Activated naive CD4-positive, alpha-beta T cell treated with anti-CD3 and anti-CD28 coated beads for 36 hours (primary cell): ENCODE measurements at regions of chr1 and their contacts with region 1.

Region 1: DNA sequence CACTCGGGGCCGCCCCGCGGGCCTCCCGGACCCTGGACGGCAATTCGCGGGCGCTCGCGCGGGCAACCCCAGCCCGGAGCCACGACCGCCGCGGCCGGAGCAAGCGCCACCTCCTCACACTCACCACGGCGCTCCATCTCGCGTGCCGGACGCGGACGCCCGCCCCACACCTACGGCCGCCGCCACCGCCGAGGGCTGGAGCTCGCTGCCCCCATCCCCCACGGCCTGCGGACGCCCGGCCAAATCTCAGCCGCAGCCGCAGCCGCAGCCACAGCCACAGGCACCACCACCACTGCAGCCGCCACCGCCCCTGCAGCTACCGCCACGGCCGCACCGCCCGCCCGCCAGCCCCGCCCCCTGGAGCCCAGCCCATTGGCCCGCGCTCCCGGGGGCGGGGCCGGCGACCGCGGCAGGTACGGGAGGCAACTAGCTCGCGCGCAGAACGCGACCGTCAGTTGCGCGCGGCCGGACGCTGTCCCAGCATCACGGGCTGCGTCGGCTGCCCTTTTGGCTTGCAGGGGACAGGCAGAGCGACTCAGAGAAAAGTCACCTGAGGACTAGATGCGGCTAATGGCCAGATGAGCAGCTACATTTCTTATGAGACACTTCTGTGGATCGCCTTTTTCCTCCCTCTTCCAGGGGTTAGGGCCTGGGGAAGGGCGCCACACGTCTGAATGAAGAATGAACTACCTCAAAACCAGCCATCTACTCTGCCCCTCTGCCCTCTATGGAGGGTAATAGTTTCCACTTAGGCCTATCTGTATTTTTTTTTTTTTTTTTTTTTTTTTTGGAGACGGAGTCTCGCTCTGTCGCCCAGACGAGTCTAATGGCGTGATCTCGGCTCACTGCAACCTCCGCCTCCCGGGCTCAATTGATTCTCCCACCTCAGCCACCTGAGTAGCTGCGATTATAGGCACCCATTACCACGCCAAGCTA is at the start of gene ARHGAP29:
- DNase-seq: peak; percentile 67
- H3K4me3 Mint-ChIP-seq: peak within 1 kb of the TSS; percentile 68
- H3K27ac Mint-ChIP-seq: no peak within 1 kb of the TSS
- H3K4me1 Mint-ChIP-seq: peaks cover 7% of the 10 kb centered on the region
- H3K27me3 Mint-ChIP-seq: peaks cover 64% of the 10 kb centered on the region
- total RNA-seq, gene ARHGAP29: 0.37 to 0.48 TPM

Region 2: DNA sequence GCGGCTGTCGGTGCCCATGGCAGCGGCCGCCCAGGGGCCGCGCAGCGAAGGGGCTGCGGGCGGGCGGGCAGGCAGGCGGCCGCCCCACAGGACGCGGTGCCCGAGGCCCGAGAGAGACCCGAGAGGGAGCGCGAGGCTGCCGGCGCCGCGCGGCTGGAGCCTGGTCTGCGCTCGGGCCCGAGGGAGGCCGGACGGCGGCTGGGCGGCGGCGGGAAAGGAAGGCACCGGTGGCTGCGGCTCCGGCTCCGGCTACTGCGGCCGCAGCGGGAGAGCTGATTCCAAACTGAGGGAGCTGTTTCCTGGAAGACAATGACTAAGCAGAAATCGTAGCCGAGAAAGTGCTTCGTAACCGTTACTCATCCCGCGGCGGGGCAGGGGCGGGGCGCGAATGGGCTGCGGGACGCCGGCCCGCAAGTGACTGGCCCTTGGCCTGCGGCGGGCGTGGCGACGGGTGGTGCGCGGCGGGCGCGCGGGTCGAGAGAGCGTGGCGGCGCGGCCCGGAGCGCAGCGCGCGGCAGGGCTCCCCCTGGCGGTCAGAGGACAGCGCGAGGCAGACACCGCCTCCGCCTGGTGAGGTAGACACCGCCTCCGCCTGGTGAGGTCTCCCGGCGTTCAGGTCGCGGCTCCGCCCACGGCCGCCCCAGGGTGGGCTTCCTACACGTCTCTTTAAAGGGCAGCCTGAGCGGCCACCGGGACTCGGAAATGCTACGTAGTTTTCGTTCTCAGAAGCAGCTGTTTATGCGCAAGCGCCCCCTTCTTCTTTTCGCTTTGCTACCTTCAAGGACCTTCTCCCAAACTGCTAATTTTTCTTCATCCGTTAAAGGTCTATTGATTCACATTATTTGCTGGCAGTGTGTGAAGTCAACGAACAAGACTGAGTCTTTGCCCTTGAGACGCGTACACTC is 328.2 kb before region 1 on chr1 and contains the start of gene GCLM:
- CTCF ChIA-PET with region 1: interaction called, 3 read pairs
- intact Hi-C with region 1: loop called (anchors 5 kb)
- DNase-seq: peak; percentile 88
- H3K4me3 Mint-ChIP-seq: peak within 1 kb of the TSS; percentile 82
- H3K27ac Mint-ChIP-seq: peak within 1 kb of the TSS; percentile 87
- H3K4me1 Mint-ChIP-seq: peaks cover 27% of the 10 kb centered on the region
- H3K27me3 Mint-ChIP-seq: no peaks in the 10 kb centered on the region
- total RNA-seq, gene GCLM: 19.5 to 22.7 TPM

Region 3: GRCh38 chr1:93958726-93959100 is 278.8 kb before region 1 on chr1:
- CTCF ChIA-PET with region 1: no interaction called
- intact Hi-C with region 1: no loop called
- DNase-seq: no peak
- H3K4me3 Mint-ChIP-seq: no peak overlapping the region
- H3K27ac Mint-ChIP-seq: no peak overlapping the region
- H3K4me1 Mint-ChIP-seq: no peaks in the 10 kb centered on the region
- H3K27me3 Mint-ChIP-seq: no peaks in the 10 kb centered on the region

Region 4: GRCh38 chr1:94061513-94062443 is 175.8 kb before region 1 on chr1:
- CTCF ChIA-PET with region 1: interaction called, 3 read pairs
- intact Hi-C with region 1: loop called (anchors 2 kb)
- DNase-seq: peak; percentile 60
- H3K4me3 Mint-ChIP-seq: no peak overlapping the region
- H3K27ac Mint-ChIP-seq: no peak overlapping the region
- H3K4me1 Mint-ChIP-seq: no peaks in the 10 kb centered on the region
- H3K27me3 Mint-ChIP-seq: peaks cover 7% of the 10 kb centered on the region

Region 5: GRCh38 chr1:94144836-94145235 is 92.7 kb before region 1 on chr1:
- CTCF ChIA-PET with region 1: no interaction called
- intact Hi-C with region 1: no loop called
- DNase-seq: no peak
- H3K4me3 Mint-ChIP-seq: no peak overlapping the region
- H3K27ac Mint-ChIP-seq: no peak overlapping the region
- H3K4me1 Mint-ChIP-seq: no peaks in the 10 kb centered on the region
- H3K27me3 Mint-ChIP-seq: no peaks in the 10 kb centered on the region